ENCODE measurements at regions of chr2 and their contacts with region 1.

Region 1: GRCh38 chr2:74458132-74458925 is at the start of gene WBP1:
- DNase-seq: peak; percentile 96 to 100 (median 98)
- ATAC-seq: peak; percentile 80
- H3K4me3 ChIP-seq: peak within 1 kb of the TSS; percentile 96
- H3K4me3 Mint-ChIP-seq: peak within 1 kb of the TSS; percentile 95
- H3K27ac ChIP-seq: peak within 1 kb of the TSS; percentile 100
- H3K27ac Mint-ChIP-seq: peak within 1 kb of the TSS; percentile 98
- H3K4me1 ChIP-seq: peaks cover 44% of the 10 kb centered on the region
- H3K4me1 Mint-ChIP-seq: peaks cover 64% of the 10 kb centered on the region
- H3K27me3 ChIP-seq: no peaks in the 10 kb centered on the region
- H3K27me3 Mint-ChIP-seq: no peaks in the 10 kb centered on the region
- CTCF ChIP-seq: no peak
- total RNA-seq, gene WBP1: 79.1 to 80.5 TPM

Region 2: GRCh38 chr2:74250189-74250631 is 208.1 kb before region 1 on chr2:
- CTCF ChIA-PET with region 1: no interaction called
- POLR2A ChIA-PET with region 1: no interaction called
- intact Hi-C with region 1: loop called in 1 of 2 experiments (anchors 5 kb)
- DNase-seq: peak; percentile 27 to 79 (median 46)
- ATAC-seq: peak; percentile 56
- H3K4me3 ChIP-seq: no peak overlapping the region
- H3K4me3 Mint-ChIP-seq: no peak overlapping the region
- H3K27ac ChIP-seq: no peak overlapping the region
- H3K27ac Mint-ChIP-seq: no peak overlapping the region
- H3K4me1 ChIP-seq: peaks cover 5% of the 10 kb centered on the region
- H3K4me1 Mint-ChIP-seq: no peaks in the 10 kb centered on the region
- H3K27me3 ChIP-seq: no peaks in the 10 kb centered on the region
- H3K27me3 Mint-ChIP-seq: no peaks in the 10 kb centered on the region
- CTCF ChIP-seq: peak; percentile 84

Region 3: DNA sequence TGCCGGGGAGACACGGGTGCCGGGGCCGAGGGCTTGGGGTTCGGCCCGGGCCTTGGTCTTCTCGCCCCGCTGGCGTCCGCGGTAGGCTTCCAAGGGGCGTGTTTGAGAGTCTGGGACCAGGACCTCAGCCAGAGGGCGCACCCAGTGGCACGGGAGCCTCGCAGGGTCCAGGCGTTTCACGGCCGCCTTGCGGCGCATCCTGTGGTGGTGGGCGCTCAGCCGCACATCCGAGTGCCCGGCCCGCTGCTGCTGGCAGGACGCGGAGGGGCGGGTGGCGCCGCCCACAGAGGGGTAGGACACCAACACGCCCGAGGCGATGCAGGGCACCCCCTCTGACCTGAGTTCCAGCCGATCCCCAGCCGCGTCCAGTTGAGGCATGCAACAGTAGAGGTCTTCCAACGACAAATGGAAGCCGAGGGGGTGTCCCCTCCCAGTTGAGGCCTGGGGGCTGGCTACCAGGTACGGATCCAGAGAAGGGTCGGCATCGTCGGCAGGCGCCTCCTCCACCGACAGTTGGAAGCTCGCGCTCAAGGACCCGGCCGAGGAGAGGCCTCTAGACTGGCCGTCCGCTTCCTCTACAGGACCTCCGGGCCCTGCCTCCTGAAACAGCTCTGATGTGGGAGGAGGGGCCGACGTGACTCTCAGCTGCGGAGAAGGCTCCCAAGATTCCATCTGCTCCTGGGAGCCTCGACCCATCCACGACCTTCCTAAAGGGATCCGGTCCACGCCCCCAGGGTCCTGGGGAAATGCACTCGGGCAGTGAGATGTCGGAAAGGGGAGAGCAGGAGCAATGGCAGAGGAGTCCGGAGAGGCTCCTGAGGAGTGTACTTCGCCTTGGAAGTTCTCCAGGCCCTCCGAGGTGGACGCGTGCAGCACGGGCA is 43.2 kb before region 1 on chr2:
- CTCF ChIA-PET with region 1: no interaction called
- POLR2A ChIA-PET with region 1: interaction called, 25 read pairs
- intact Hi-C with region 1: loop called in 1 of 2 experiments (anchors 2 kb)
- DNase-seq: peak in 6 of 14 experiments; percentile 17 to 48 (median 38)
- ATAC-seq: peak; percentile 30
- H3K4me3 ChIP-seq: peak overlapping the region; percentile 49
- H3K4me3 Mint-ChIP-seq: peak overlapping the region; percentile 84
- H3K27ac ChIP-seq: no peak overlapping the region
- H3K27ac Mint-ChIP-seq: peak overlapping the region; percentile 71
- H3K4me1 ChIP-seq: peaks cover 25% of the 10 kb centered on the region
- H3K4me1 Mint-ChIP-seq: peaks cover 34% of the 10 kb centered on the region
- H3K27me3 ChIP-seq: peaks cover 0 to 16% of the 10 kb centered on the region in 2 experiments
- H3K27me3 Mint-ChIP-seq: no peaks in the 10 kb centered on the region
- CTCF ChIP-seq: no peak

Region 4: DNA sequence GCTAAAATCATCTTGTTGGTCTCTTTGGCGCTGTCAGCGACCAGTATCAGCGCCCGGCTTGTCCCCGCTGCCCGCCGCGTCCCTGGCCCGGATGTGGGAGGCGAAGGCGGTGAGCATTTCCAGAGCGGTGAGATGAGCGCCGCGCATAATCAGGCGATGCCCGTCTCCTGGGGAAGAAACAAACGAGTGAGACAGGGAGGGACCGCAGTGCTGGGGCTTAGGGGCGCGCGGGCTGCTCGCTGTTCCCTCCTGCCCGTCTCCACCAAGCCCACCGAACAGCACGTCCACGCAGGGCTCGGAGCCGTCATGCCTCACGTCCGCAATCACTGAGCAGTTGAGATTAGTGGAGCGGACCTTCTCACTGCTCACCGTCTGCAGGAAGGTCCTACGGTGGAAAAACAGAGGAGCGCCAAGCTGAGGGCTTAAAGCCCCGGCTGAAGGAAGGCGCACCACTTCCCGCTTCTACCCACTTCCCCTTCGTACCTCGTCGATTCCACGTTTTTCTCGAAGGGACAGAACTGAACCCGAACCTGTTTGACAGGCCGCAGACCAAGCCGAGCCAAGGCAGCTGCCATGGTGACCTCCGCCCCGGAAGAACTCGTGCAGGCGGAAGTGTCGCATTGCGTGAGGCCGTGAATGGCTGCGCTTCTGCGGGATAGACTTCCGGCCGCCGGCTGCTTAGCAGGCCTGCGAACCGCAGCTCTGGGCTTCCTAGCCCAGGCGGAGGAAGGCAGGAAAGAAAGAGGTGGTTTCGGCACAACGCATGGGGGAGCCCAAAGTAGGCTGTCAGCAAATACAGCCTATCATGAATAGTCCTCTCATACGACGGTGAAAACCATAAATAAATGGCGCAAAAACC is 14.0 kb after region 1 on chr2 and contains the start of gene MRPL53:
- CTCF ChIA-PET with region 1: interaction called, 5 read pairs
- POLR2A ChIA-PET with region 1: interaction called, 225 read pairs
- intact Hi-C with region 1: loop called (anchors 1 kb)
- DNase-seq: peak; percentile 96 to 99 (median 97)
- ATAC-seq: peak; percentile 92
- H3K4me3 ChIP-seq: peak within 1 kb of the TSS; percentile 80
- H3K4me3 Mint-ChIP-seq: peak within 1 kb of the TSS; percentile 95
- H3K27ac ChIP-seq: peak within 1 kb of the TSS; percentile 85 to 91
- H3K27ac Mint-ChIP-seq: peak within 1 kb of the TSS; percentile 96
- H3K4me1 ChIP-seq: peaks cover 30% of the 10 kb centered on the region
- H3K4me1 Mint-ChIP-seq: peaks cover 25% of the 10 kb centered on the region
- H3K27me3 ChIP-seq: no peaks in the 10 kb centered on the region
- H3K27me3 Mint-ChIP-seq: no peaks in the 10 kb centered on the region
- CTCF ChIP-seq: no peak
- total RNA-seq, gene MRPL53: 39.5 to 44.3 TPM

Region 5: DNA sequence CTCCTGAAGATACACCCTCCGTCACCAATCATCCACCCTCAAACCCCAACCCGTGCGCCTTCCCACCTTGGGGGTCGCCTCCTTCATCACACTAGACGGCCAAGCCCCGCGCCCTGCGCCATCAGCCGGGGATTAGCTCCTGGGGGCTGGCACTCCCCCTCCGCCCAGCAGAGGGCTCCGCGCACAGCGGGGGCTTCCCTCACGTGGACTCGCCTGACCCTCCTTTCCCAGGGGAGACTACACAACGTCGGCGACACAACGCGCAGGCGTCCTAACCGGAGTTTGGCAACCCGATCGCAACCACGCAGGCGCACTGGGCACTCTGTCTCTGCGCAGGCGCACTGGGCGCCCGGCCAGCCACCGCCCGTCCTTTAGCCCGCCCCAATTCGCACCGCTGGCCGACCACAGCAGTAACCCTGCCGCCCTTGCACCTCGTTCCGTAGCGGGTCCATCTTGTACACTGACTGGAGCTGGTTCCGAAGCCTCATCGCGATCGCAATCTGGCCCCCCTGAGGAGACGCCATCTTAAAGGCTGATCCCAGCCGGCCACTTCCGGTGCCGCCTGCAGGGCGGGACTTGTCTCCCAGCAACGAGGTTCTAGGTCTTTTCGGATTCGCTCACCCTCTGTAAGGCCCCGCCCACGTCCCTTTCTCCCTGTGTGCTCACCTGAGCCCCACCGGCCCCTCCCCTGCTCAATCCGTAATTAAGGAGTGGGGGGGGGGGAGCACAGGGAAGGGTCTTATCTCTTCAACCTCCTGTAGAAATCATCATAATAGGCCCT is 49.0 kb after region 1 on chr2 and contains the start of gene PCGF1:
- CTCF ChIA-PET with region 1: no interaction called
- POLR2A ChIA-PET with region 1: interaction called, 23 read pairs
- intact Hi-C with region 1: loop called in 1 of 2 experiments (anchors 2 kb)
- DNase-seq: peak; percentile 97 to 100 (median 98)
- ATAC-seq: peak; percentile 95
- H3K4me3 ChIP-seq: peak within 1 kb of the TSS; percentile 92
- H3K4me3 Mint-ChIP-seq: peak within 1 kb of the TSS; percentile 100
- H3K27ac ChIP-seq: peak within 1 kb of the TSS; percentile 98
- H3K27ac Mint-ChIP-seq: peak within 1 kb of the TSS; percentile 97
- H3K4me1 ChIP-seq: peaks cover 49% of the 10 kb centered on the region
- H3K4me1 Mint-ChIP-seq: peaks cover 62% of the 10 kb centered on the region
- H3K27me3 ChIP-seq: peaks cover 25 to 41% of the 10 kb centered on the region in 2 experiments
- H3K27me3 Mint-ChIP-seq: peaks cover 75% of the 10 kb centered on the region
- CTCF ChIP-seq: no peak
- total RNA-seq, gene PCGF1: 11.6 to 13.8 TPM